HCT116 (cell line): ENCODE measurements at regions of chr5 and their contacts with region 1.

Region 1: DNA sequence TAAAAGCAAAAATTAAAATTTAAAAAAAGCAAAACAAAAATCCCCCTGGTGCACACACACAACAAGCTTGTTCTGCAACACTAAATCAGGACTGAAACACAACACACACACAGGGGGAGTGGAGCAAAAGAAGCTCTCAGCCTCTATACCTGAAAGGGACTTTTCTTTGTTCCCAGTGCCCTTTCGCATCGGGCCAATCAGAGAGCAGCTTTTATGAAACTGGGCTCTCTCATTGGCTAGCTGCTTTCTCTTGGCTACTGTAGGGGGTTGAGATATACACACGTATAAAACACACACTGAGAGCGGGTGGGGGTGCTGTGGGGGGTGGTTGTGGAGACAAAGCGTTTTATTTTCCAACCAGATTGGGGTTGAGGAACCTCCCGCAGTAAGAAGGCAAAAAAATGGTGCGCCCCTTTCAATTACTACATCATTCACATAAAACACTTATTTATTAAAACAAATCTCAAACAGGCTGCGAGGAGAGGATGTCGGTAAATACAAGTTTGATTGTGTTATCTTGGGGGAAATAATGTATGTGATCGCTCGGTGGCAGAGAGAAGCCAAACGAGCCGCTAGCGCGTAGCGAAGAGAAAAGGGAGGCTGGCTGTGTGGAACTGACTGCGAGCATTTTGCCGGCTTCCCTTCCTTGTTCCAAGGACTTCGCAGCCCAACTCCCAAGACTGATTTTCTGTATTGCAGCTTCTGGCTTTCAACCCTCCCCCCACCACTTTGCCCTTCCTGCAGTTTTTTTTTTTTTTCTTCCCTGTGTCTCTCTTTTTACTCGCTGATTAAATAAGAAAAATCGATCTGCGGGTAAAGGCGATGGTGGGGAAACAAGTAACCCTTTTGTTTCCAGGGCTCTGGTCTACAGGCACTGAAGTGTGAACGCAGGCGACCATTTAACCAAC is 2.5 kb upstream of the ZNF608 start:
- DNase-seq: peak; percentile 92
- ATAC-seq: peak; percentile 90
- H3K4me3 ChIP-seq: peak overlapping the region; percentile 65 to 68
- H3K27ac ChIP-seq: peak overlapping the region; percentile 66
- H3K4me1 ChIP-seq: peaks cover 30 to 42% of the 10 kb centered on the region in 2 experiments; a peak in 3 of 4 replicates
- H3K27me3 ChIP-seq: no peaks in the 10 kb centered on the region
- CTCF ChIP-seq: no peak
- POLR2A ChIP-seq: peak; percentile 80
- RAD21 ChIP-seq: peak; percentile 15; the same call in 1 of the 2 replicates

Region 2: DNA sequence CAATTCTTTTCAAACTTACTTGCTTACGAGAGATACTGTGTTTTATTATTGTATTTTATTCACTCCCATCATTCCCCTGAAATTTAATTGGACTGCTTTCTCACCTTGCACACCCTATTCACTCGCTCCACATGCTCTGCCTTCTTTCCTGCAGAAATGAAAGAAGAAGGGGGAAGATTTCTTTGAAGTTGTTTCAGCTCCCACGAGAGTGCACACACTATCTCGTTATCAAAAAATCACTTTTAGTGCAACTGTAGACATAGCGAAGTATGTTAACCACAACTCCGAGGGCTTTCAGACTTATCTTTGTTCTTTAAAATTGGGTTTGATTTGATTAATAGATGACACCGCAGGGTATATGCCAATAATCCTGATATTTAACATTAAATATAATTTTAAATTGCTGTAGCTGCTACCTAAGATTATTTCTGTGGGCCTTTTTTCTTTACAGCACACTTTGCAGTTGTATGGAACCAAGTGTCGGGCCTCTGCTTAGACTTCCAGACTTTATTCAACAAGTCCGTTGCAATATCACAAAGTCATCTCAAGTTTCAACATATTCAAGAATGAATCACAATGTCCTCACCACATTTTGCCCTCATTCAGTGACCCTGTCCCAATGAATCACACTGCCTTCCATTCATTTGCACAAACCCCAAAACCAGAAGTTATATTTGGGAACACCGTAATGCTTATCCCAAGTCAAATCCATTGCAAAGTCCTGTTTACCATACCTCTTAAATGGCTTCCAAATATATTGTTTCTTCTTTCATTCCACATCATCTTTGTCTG is 797.6 kb before region 1 on chr5:
- CTCF ChIA-PET with region 1: no interaction called
- POLR2A ChIA-PET with region 1: interaction called, 3 read pairs
- RAD21 ChIA-PET with region 1: no interaction called
- intact Hi-C with region 1: loop called (anchors 10 kb)
- DNase-seq: peak; percentile 39
- ATAC-seq: peak; percentile 84
- H3K4me3 ChIP-seq: no peak overlapping the region
- H3K27ac ChIP-seq: no peak overlapping the region
- H3K4me1 ChIP-seq: peaks cover 7 to 16% of the 10 kb centered on the region in 2 experiments
- H3K27me3 ChIP-seq: no peaks in the 10 kb centered on the region
- CTCF ChIP-seq: no peak
- POLR2A ChIP-seq: no peak
- RAD21 ChIP-seq: no peak

Region 3: GRCh38 chr5:124655922-124656511 is 92.9 kb before region 1 on chr5:
- CTCF ChIA-PET with region 1: no interaction called
- POLR2A ChIA-PET with region 1: interaction called, 8 read pairs
- RAD21 ChIA-PET with region 1: interaction called in 1 of 2 experiments, 3 read pairs
- intact Hi-C with region 1: loop called (anchors 2 kb)
- DNase-seq: peak; percentile 78
- ATAC-seq: peak; percentile 66
- H3K4me3 ChIP-seq: peak overlapping the region; percentile 0 to 47
- H3K27ac ChIP-seq: peak overlapping the region; percentile 54
- H3K4me1 ChIP-seq: peaks cover 80 to 81% of the 10 kb centered on the region in 2 experiments
- H3K27me3 ChIP-seq: no peaks in the 10 kb centered on the region
- CTCF ChIP-seq: no peak
- POLR2A ChIP-seq: no peak
- RAD21 ChIP-seq: no peak; the same call in 1 of the 2 replicates

Region 4: GRCh38 chr5:124704594-124705284 is 44.2 kb before region 1 on chr5:
- CTCF ChIA-PET with region 1: no interaction called
- POLR2A ChIA-PET with region 1: no interaction called
- RAD21 ChIA-PET with region 1: no interaction called
- intact Hi-C with region 1: no loop called
- DNase-seq: no peak
- ATAC-seq: no peak
- H3K4me3 ChIP-seq: no peak overlapping the region
- H3K27ac ChIP-seq: no peak overlapping the region
- H3K4me1 ChIP-seq: no peaks in the 10 kb centered on the region
- H3K27me3 ChIP-seq: no peaks in the 10 kb centered on the region
- CTCF ChIP-seq: no peak
- POLR2A ChIP-seq: no peak
- RAD21 ChIP-seq: no peak

Region 5: GRCh38 chr5:125199968-125200841 is 451.3 kb after region 1 on chr5:
- CTCF ChIA-PET with region 1: no interaction called
- POLR2A ChIA-PET with region 1: no interaction called
- RAD21 ChIA-PET with region 1: no interaction called
- intact Hi-C with region 1: no loop called
- DNase-seq: no peak
- ATAC-seq: no peak
- H3K4me3 ChIP-seq: no peak overlapping the region
- H3K27ac ChIP-seq: no peak overlapping the region
- H3K4me1 ChIP-seq: no peaks in the 10 kb centered on the region
- H3K27me3 ChIP-seq: no peaks in the 10 kb centered on the region
- CTCF ChIP-seq: no peak
- POLR2A ChIP-seq: no peak
- RAD21 ChIP-seq: no peak

Region 6: DNA sequence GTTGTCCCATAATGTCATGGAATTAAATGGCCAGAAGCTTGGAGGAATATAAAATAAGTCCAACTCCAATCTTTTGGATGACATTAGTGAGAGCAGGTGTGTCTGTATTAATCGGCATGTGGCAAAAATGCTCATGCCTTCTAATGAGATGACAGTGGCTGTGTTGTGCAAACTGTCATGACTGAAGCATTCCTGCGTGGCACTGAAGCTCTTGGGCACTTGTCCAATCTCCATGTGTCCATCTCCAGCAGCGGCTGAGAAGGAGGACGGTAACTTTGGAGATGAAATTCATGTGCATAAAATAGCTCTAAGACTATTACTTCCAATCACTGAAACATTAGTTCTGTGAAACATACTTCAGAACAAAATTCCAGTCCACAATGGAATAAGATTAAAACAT is 976.8 kb after region 1 on chr5:
- CTCF ChIA-PET with region 1: no interaction called
- POLR2A ChIA-PET with region 1: no interaction called
- RAD21 ChIA-PET with region 1: no interaction called
- intact Hi-C with region 1: no loop called
- DNase-seq: no peak
- ATAC-seq: no peak
- H3K4me3 ChIP-seq: no peak overlapping the region
- H3K27ac ChIP-seq: no peak overlapping the region
- H3K4me1 ChIP-seq: no peaks in the 10 kb centered on the region
- H3K27me3 ChIP-seq: no peaks in the 10 kb centered on the region
- CTCF ChIP-seq: no peak
- POLR2A ChIP-seq: no peak
- RAD21 ChIP-seq: no peak